Prostate gland (tissue), 2 donors: ENCODE measurements at regions of chr3 and their contacts with region 1.

Region 1: GRCh38 chr3:32947789-32948238 is 3.6 kb upstream of the CCR4 start:
- DNase-seq: peak; percentile 59
- H3K4me3 ChIP-seq: no peak overlapping the region
- H3K27ac ChIP-seq: no peak overlapping the region
- H3K4me1 ChIP-seq: no peaks in the 10 kb centered on the region
- H3K27me3 ChIP-seq: no peaks in the 10 kb centered on the region
- CTCF ChIP-seq: peak in 3 of 4 experiments; percentile 58 to 66 (median 59)
- POLR2A ChIP-seq: no peak

Region 2: GRCh38 chr3:32973982-32974381 is 26.2 kb after region 1 on chr3:
- intact Hi-C with region 1: no loop called
- DNase-seq: no peak
- H3K4me3 ChIP-seq: no peak overlapping the region
- H3K27ac ChIP-seq: no peak overlapping the region
- H3K4me1 ChIP-seq: no peaks in the 10 kb centered on the region
- H3K27me3 ChIP-seq: no peaks in the 10 kb centered on the region
- CTCF ChIP-seq: no peak
- POLR2A ChIP-seq: no peak

Region 3: GRCh38 chr3:32992322-32992692 is 44.5 kb after region 1 on chr3:
- intact Hi-C with region 1: no loop called
- DNase-seq: no peak
- H3K4me3 ChIP-seq: no peak overlapping the region
- H3K27ac ChIP-seq: no peak overlapping the region
- H3K4me1 ChIP-seq: no peaks in the 10 kb centered on the region
- H3K27me3 ChIP-seq: no peaks in the 10 kb centered on the region
- CTCF ChIP-seq: no peak
- POLR2A ChIP-seq: no peak

Region 4: GRCh38 chr3:33074217-33075067 is 126.6 kb after region 1 on chr3:
- intact Hi-C with region 1: loop called (anchors 5 kb)
- DNase-seq: peak; percentile 43
- H3K4me3 ChIP-seq: no peak overlapping the region
- H3K27ac ChIP-seq: no peak overlapping the region
- H3K4me1 ChIP-seq: no peaks in the 10 kb centered on the region
- H3K27me3 ChIP-seq: no peaks in the 10 kb centered on the region
- CTCF ChIP-seq: peak; percentile 42 to 87 (median 70)
- POLR2A ChIP-seq: no peak

Region 5: DNA sequence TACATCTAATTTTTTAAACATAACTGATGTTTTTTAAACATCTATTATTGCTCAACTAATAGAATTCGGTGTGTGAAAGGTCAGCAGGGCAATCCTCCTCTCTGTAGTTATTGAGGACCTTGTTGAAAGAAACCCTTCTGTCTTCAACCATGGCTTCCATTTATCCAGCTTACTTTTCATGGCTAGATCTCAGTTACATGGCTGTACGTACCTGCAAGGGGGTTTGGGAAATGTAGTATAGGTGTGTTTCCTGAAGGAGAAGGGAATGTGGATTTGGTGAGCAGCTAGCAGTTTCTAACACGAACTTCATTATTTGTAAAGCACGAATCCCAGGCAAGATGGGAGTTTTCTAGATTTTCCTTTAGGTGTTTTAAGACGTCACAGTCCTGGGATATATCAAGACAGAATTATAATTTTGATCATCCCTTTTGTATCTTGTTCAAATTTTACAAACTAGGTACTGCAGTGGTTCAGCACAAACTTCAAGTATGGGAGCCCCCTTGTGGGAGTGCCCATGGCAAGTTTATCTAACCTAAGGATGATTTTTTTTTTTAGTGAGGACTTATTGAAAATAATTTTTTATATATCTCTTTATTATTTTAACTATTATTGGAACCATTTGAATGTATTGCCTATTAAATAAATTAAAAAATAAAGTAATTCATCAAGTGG is 371.0 kb after region 1 on chr3:
- intact Hi-C with region 1: no loop called
- DNase-seq: no peak
- H3K4me3 ChIP-seq: no peak overlapping the region
- H3K27ac ChIP-seq: no peak overlapping the region
- H3K4me1 ChIP-seq: no peaks in the 10 kb centered on the region
- H3K27me3 ChIP-seq: no peaks in the 10 kb centered on the region
- CTCF ChIP-seq: no peak
- POLR2A ChIP-seq: no peak

Region 6: DNA sequence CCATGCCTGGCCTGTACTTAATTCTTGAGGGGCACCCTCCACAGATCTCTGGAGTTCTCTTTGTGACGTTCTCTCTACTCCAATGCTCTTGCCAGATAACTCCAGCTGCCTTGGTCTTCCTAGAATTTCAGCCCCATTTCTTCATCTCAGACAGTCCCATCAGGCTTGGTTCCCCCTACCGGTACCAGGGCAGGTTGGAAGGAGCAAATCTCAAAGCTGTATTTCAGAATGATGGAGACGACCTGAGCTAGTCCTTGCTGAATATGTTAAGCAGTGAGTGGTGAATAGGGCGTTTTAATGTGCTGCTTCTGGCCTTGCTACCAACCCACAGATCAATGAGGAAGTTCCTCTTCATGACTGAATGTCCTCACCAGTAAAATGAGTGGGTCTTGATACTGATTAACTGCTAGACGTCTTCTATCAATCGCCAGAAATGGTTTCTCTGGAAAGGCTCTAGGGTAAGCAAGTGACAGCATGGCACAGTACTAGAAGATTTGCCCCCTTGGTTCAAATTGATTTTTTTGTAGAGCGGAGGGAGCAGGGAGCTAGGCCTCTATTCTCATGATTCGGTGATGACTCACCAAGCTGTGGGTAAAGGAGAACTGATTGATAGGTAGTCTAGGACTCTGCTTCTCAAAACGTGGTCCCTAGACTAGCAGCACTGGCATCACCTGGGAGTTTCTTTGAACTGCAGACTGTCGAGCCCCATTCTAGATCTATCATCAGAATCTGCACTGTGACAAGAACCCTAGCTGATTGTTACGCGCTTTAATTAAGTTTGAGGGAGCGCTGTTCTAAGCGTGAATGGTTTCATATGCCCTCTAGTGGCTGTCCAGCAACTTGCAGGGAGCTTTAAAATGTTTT is 424.6 kb after region 1 on chr3:
- intact Hi-C with region 1: loop called (anchors 5 kb)
- DNase-seq: peak; percentile 27
- H3K4me3 ChIP-seq: no peak overlapping the region
- H3K27ac ChIP-seq: no peak overlapping the region
- H3K4me1 ChIP-seq: no peaks in the 10 kb centered on the region
- H3K27me3 ChIP-seq: no peaks in the 10 kb centered on the region
- CTCF ChIP-seq: peak; percentile 72 to 82 (median 80)
- POLR2A ChIP-seq: no peak

Region 7: DNA sequence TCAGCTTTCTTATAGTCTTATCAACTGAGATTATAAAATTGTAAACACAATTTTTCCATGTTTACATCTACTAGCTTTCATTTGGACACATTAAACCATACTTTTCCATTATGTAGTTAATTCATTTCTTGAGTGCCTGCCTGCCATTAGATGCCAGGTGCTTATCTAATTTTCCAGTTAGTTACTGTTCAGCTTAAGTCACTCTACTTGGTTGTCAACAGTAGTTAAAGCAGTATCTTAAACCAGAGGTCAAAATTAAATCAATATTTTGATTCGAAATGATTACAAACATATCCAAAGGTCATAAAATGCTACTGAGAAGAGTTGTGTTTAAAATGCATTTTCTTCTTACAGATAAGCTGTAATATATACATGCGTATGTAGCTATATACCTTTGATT is 548.6 kb after region 1 on chr3:
- intact Hi-C with region 1: no loop called
- DNase-seq: no peak
- H3K4me3 ChIP-seq: no peak overlapping the region
- H3K27ac ChIP-seq: no peak overlapping the region
- H3K4me1 ChIP-seq: no peaks in the 10 kb centered on the region
- H3K27me3 ChIP-seq: no peaks in the 10 kb centered on the region
- CTCF ChIP-seq: no peak
- POLR2A ChIP-seq: no peak